Activated B cell treated with CpG ODN at 0.5 μM for 24 hours (primary cell): ENCODE measurements at regions of chr5 and their contacts with region 1.

Region 1: DNA sequence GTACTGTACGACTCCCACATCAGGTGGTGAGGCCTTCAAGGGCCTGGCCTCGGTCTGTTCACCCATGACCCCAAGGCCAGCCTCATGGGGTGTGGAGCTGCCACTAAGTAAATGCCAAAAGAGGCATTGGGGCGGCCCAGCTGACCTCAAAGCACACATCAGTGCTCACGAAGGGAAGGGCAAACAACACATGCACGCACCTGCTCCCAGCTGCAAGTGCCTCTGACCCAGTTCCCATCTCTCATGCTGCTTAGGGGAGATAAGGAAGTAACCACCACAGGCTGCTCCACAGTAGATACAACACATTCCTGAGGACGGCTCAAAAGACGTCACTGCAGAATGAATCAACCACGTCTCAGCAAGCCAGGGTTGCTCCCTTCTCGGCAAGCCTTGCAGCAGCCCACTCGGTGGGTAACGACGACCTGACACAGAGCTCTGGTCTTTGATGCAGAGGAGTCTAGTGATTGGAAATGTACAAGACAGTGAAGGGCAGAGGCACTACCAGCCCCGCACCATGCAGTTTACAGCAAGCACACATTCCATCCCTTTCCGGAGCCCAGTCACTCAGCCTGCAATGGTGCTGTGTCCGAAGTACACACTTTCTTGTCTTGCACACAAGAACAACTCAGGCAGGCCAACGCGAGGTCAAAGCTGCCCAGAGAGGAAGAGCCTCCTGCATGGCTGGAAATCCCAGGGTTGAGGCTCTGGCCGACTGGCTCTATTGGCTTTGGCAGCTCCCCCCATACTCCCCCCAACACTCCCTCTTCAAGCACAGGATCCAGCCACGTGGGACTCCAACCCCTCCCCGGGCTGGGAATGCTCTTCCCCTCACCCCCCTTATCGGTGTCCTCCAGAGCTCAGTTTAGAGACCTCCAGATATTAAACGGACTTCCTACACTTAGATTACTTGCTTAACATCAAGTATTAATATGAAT is 31.8 kb downstream of the FABP6 start:
- DNase-seq: no peak
- ATAC-seq: peak; percentile 68
- H3K4me3 Mint-ChIP-seq: no peak overlapping the region
- H3K27ac Mint-ChIP-seq: no peak overlapping the region
- H3K4me1 Mint-ChIP-seq: peaks cover 24% of the 10 kb centered on the region
- H3K27me3 Mint-ChIP-seq: peaks cover 26% of the 10 kb centered on the region
- CTCF ChIP-seq: no peak

Region 2: DNA sequence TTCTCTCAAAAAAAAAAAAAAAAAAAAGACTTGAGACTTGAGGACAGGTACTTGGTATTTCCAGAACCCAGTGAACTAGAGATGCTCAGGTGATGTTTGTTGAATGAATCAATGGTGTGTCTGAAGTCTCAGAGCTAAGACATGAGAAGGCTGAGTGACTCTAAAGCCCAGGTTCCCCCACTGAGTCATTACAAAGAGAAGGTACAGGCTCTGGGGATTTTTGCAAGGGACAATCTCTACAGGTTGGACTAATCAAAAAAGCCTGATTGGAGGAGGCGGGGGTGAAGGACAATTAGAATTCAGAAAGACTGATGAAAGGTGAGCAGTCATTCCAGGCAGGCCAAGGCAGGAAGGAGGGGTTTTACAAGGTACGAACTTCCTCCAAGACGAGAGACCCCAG is 40.1 kb before region 1 on chr5:
- CTCF ChIA-PET with region 1: no interaction called
- POLR2A ChIA-PET with region 1: interaction called, 10 read pairs
- intact Hi-C with region 1: no loop called
- DNase-seq: no peak
- ATAC-seq: no peak
- H3K4me3 Mint-ChIP-seq: no peak overlapping the region
- H3K27ac Mint-ChIP-seq: no peak overlapping the region
- H3K4me1 Mint-ChIP-seq: no peaks in the 10 kb centered on the region
- H3K27me3 Mint-ChIP-seq: peaks cover 4% of the 10 kb centered on the region
- CTCF ChIP-seq: no peak